Activated CD8-positive, alpha-beta T cell treated with anti-CD3 and anti-CD28 coated beads, Interleukin-2, amount 10 ng/mL, durations not matched to agents 7 days and 5 days (primary cell): ENCODE measurements at regions of chr5 and their contacts with region 1.

Region 1: DNA sequence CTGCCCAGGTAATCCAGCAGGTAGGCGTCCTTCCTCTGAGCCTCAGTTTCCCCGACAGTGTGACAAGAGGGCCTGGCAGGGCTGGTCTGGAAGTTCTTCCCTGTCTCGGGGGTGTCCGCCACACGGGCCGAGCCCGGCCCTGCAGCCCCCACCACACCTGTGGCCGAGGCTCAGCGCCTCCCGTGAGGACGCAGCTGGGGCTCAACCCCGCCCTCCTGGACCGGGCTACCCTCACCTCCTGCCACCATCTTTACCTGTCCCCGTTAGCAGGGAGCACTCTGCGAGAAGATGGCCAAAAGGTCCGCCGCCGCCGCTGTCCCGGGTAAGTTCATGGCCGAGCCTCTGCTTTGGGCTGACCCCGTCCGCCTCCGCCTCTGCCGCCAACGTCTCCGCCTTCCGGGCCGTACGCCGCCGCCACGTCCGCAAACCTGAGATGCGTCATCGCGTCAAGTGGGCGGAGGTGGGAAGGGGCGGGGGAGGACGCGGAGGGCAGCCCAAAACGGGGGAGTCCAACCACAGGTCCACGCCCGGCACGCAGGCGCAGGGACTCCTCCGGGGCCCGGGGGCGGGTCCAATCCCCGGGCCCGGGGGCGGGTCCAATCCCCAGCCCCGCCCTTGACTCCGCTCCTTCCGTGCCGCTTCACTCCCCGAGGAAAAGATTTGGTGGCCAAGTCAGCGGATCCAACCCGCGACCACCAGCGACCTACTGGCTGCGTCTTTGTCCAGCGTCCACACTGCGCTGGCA is at the start of gene LYSMD3:
- DNase-seq: peak; percentile 98
- ATAC-seq: peak; percentile 95
- H3K4me3 Mint-ChIP-seq: peak within 1 kb of the TSS; percentile 95
- H3K27ac Mint-ChIP-seq: peak within 1 kb of the TSS; percentile 97
- H3K4me1 Mint-ChIP-seq: peaks cover 26% of the 10 kb centered on the region
- H3K27me3 Mint-ChIP-seq: peaks cover 20% of the 10 kb centered on the region
- total RNA-seq, gene LYSMD3: 18.3 to 19.0 TPM

Region 2: GRCh38 chr5:90096415-90097081 is 432.8 kb before region 1 on chr5:
- CTCF ChIA-PET with region 1: no interaction called
- POLR2A ChIA-PET with region 1: no interaction called
- DNase-seq: no peak
- ATAC-seq: no peak
- H3K4me3 Mint-ChIP-seq: no peak overlapping the region
- H3K27ac Mint-ChIP-seq: no peak overlapping the region
- H3K4me1 Mint-ChIP-seq: no peaks in the 10 kb centered on the region
- H3K27me3 Mint-ChIP-seq: no peaks in the 10 kb centered on the region

Region 3: GRCh38 chr5:90409318-90410177 is 119.8 kb before region 1 on chr5 and contains the start of gene CETN3:
- CTCF ChIA-PET with region 1: interaction called, 16 read pairs
- POLR2A ChIA-PET with region 1: interaction called, 22 read pairs
- DNase-seq: peak; percentile 94
- ATAC-seq: peak; percentile 95
- H3K4me3 Mint-ChIP-seq: no peak within 1 kb of the TSS
- H3K27ac Mint-ChIP-seq: no peak within 1 kb of the TSS
- H3K4me1 Mint-ChIP-seq: peaks cover 11% of the 10 kb centered on the region
- H3K27me3 Mint-ChIP-seq: no peaks in the 10 kb centered on the region
- total RNA-seq, gene CETN3: 30.6 to 31.3 TPM

Region 4: DNA sequence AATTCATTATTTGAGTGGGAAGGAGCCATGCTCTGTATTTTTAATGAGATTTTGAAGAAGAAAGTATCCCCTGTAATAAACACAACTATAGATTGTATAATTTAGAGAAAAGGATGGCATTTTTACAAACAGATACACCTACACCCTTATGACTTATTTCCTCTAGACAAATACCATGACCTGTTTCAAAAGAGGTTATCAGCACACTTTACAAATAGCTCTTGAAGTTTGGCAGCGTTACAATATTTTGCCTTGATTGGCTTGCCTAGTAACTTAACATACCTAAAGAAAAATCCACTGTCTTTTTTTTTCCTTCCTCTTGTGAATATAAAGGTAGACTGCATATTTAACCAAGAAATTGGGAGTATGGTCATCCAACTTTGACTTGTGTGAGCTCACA is 91.3 kb before region 1 on chr5:
- CTCF ChIA-PET with region 1: interaction called, 76 read pairs
- POLR2A ChIA-PET with region 1: no interaction called
- DNase-seq: no peak
- ATAC-seq: no peak
- H3K4me3 Mint-ChIP-seq: no peak overlapping the region
- H3K27ac Mint-ChIP-seq: no peak overlapping the region
- H3K4me1 Mint-ChIP-seq: peaks cover 7% of the 10 kb centered on the region
- H3K27me3 Mint-ChIP-seq: peaks cover 10% of the 10 kb centered on the region

Region 5: DNA sequence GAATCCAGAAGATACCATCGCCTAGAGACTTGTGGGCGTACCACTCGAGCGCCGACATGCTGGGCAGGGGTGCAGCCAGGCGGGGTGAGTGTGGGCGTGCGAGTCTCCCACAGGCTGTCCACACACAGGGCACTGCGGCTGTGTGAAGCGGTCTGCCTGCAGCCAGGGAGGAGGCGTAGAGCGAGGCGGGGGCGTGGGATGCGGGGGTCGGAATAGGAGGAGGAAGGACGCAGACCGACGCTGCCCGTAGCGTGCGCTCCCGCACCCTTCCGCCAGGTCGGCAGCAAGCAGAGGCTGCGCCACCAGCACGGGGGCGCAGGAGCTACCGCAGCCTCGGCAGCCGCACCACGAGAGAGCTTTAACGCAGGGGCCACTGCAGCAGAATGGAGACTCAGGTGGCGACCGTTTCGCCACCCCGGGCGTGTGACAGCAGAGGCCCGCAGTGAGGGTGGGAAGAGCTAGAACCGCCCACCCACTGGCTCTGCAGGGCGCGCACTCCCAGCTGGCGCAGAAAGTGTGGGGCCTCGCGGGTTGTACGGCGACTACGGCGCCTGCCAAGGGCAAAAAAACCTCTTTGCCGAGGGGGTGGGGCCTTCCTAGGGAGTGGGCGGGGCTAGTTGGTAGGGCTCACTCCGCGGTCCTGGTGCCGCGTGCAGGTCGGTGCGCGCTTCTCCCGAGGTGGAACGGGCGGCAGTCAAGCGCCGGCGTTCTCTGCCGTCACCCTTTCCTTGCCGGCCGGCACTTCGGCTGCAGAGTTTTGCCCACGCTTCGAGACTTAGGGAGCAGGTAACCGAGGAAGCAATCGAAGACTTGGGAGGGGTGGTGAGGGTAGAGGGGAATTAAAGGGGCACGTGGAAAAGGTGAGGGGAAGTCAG is 54.9 kb before region 1 on chr5 and contains the starts of genes MBLAC2 and POLR3G:
- CTCF ChIA-PET with region 1: interaction called, 14 read pairs
- POLR2A ChIA-PET with region 1: interaction called, 9 read pairs
- DNase-seq: peak; percentile 96
- ATAC-seq: peak; percentile 89
- H3K4me3 Mint-ChIP-seq: peak within 1 kb of the TSS; percentile 89
- H3K27ac Mint-ChIP-seq: peak within 1 kb of the TSS; percentile 92
- H3K4me1 Mint-ChIP-seq: peaks cover 29% of the 10 kb centered on the region
- H3K27me3 Mint-ChIP-seq: no peaks in the 10 kb centered on the region
- total RNA-seq, gene MBLAC2: 5.1 to 5.5 TPM
- total RNA-seq, gene POLR3G: 5.5 to 5.8 TPM

Region 6: GRCh38 chr5:90640484-90641059 is 111.2 kb after region 1 on chr5:
- CTCF ChIA-PET with region 1: no interaction called
- POLR2A ChIA-PET with region 1: no interaction called
- DNase-seq: no peak
- ATAC-seq: no peak
- H3K4me3 Mint-ChIP-seq: no peak overlapping the region
- H3K27ac Mint-ChIP-seq: no peak overlapping the region
- H3K4me1 Mint-ChIP-seq: no peaks in the 10 kb centered on the region
- H3K27me3 Mint-ChIP-seq: peaks cover 2% of the 10 kb centered on the region

Region 7: GRCh38 chr5:91225848-91226686 is 696.7 kb after region 1 on chr5:
- CTCF ChIA-PET with region 1: no interaction called
- POLR2A ChIA-PET with region 1: no interaction called
- DNase-seq: peak; percentile 71
- ATAC-seq: peak; percentile 71
- H3K4me3 Mint-ChIP-seq: no peak overlapping the region
- H3K27ac Mint-ChIP-seq: no peak overlapping the region
- H3K4me1 Mint-ChIP-seq: no peaks in the 10 kb centered on the region
- H3K27me3 Mint-ChIP-seq: peaks cover 4% of the 10 kb centered on the region